ENCODE measurements at regions of chr9 and their contacts with region 1.

Region 1: GRCh38 chr9:38392235-38393127 is at the start of gene ALDH1B1:
- DNase-seq: peak; percentile 45
- H3K4me3 ChIP-seq: peak within 1 kb of the TSS; percentile 85
- CTCF ChIP-seq: peak; percentile 12

Region 2: DNA sequence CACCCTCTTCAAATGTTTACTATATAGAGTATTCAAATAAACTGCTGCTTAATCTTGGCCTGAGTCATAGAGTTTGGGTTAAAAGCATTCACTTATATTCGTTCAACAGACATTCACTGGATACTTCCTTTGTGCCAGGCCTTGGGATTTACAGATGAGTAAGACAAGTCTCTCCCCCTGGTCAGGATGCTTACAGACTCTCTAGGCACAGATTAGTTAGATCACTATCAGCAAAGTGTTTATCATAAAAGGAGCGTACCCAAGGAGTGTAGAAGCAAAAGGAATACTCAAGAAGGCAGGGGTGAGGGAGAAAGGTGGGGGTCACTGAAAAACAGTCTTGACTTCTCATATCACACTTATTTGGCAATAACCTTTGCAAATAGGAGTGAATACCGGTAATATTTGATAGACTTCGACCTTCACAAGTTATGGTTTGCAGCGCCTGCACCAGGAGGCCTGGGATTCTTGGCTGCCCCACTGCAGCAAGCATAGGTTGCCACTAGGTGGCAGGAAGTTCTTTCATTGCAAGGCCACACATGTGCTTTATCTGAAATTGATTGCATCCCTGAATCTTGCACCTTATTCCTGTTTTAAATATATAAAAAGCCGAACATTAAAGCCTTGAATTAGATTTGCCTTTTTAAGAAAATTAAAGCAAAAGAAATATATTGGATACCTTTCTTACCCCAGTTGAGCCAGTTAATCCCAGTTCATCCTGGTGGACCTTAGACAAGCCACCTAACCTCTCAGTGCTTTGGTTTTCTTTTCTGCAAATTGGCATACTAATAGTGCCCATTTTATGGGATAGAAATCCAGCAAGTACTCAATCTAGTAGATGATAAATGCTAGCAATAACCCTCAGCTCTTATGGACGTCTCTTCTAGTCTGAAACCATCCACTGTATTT is 645.4 kb before region 1 on chr9:
- in situ Hi-C with region 1: loop called (anchors 25 kb)
- DNase-seq: peak; percentile 46
- H3K4me3 ChIP-seq: no peak overlapping the region
- CTCF ChIP-seq: peak; percentile 97

Region 3: GRCh38 chr9:38035873-38036272 is 356.6 kb before region 1 on chr9:
- in situ Hi-C with region 1: no loop called
- DNase-seq: no peak
- H3K4me3 ChIP-seq: no peak overlapping the region
- CTCF ChIP-seq: no peak

Region 4: GRCh38 chr9:38339087-38339486 is 53.4 kb before region 1 on chr9:
- in situ Hi-C with region 1: no loop called
- DNase-seq: peak; percentile 65
- H3K4me3 ChIP-seq: no peak overlapping the region
- CTCF ChIP-seq: no peak

Region 5: GRCh38 chr9:38467404-38467803 is 74.9 kb after region 1 on chr9:
- in situ Hi-C with region 1: no loop called
- DNase-seq: no peak
- H3K4me3 ChIP-seq: no peak overlapping the region
- CTCF ChIP-seq: no peak